ENCODE measurements at regions of chr9 and their contacts with region 1.

Region 1: DNA sequence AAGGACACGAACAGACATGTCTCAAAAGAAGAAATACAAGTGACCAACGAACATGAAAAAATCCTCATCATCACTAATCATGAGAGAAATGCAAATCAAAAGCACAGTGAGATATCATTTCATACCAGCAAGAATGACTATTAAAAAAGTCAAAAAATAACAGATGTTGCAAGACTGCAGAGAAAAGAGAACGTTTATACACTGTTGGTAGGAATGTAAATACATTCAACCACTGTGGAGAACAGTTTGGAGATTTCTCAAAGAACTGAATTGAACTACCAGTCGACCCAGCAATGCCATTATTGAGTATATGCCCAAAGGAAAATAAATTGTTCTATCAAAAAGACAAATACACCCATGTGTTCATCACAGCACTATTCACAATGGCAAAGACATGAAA is 45.7 kb downstream of the FXN start:
- DNase-seq: no peak
- H3K4me3 ChIP-seq: no peak overlapping the region
- H3K27ac ChIP-seq: no peak overlapping the region
- H3K4me1 ChIP-seq: no peaks in the 10 kb centered on the region
- H3K27me3 ChIP-seq: no peaks in the 10 kb centered on the region
- CTCF ChIP-seq: no peak
- POLR2A ChIP-seq: no peak

Region 2: DNA sequence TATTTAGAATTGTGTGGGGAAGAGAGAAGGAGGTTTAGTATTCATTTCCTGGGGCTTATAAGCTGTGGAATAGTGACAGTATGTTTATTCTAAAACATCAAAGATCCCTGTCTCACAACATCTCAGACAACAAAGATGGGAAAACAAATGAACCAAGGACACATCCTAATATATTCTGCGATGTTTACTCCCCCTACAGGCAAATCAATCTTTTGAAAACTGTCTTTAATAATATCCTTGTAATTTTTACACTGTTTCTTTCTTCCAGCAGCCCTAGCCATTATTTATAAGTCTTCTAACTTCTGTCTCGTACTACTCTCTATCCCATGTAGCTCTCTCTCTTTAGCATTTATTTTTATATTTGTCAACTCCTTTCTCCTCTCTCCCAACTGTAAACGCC is 507.1 kb before region 1 on chr9:
- intact Hi-C with region 1: loop called (anchors 5 kb)
- DNase-seq: no peak
- H3K4me3 ChIP-seq: no peak overlapping the region
- H3K27ac ChIP-seq: no peak overlapping the region
- H3K4me1 ChIP-seq: no peaks in the 10 kb centered on the region
- H3K27me3 ChIP-seq: no peaks in the 10 kb centered on the region
- CTCF ChIP-seq: no peak
- POLR2A ChIP-seq: no peak

Region 3: GRCh38 chr9:69173891-69174615 is 92.8 kb after region 1 on chr9 and contains the start of gene TJP2:
- intact Hi-C with region 1: no loop called
- DNase-seq: peak; percentile 34 to 65
- H3K4me3 ChIP-seq: peak within 1 kb of the TSS; percentile 61 to 75 (median 70)
- H3K27ac ChIP-seq: peak within 1 kb of the TSS; percentile 68 to 73
- H3K4me1 ChIP-seq: peaks cover 0 to 13% of the 10 kb centered on the region in 2 donors
- H3K27me3 ChIP-seq: no peaks in the 10 kb centered on the region
- CTCF ChIP-seq: no peak
- POLR2A ChIP-seq: no peak
- total RNA-seq, gene TJP2: 85.2 to 125 (median 108) TPM

Measured in breast epithelium (tissue), 4 donors.